Left cardiac atrium (tissue), 4 donors: ENCODE measurements at regions of chr2 and their contacts with region 1.

Region 1: DNA sequence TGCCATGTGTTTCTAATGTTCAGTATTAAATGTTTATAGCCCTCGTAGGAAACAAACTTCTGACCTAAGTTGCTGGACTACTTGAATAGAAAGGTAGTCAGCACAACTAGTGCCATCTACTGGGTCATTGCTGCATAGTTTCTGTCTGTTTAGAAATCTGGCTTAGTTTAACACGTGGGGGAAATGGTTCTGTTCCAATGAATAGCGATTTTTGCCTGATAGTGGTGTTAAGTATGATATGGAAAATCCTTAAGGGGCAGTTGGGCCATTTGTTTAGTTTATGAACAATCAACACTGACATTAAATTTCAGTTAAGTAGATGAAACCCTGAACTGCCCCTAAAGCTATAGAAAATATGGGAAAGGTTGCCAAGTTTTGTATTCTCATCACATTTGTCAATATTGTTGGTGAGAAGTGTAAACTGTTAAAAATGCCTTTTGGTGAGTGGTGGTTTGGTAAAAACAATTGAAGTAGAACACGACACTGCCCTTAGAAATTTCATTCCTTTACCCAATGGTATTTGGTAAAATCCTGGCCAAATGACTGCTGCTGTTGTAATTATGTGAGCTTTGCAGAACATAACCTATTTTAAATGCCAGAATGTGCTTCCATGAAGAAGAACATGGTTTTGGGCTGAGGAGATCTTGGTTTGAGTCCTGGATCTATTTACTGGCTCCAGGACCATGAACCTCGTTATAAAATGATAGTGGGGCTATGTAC is 13.2 kb downstream of the NABP1 start:
- DNase-seq: no peak
- ATAC-seq: peak; percentile 56 to 77

Region 2: DNA sequence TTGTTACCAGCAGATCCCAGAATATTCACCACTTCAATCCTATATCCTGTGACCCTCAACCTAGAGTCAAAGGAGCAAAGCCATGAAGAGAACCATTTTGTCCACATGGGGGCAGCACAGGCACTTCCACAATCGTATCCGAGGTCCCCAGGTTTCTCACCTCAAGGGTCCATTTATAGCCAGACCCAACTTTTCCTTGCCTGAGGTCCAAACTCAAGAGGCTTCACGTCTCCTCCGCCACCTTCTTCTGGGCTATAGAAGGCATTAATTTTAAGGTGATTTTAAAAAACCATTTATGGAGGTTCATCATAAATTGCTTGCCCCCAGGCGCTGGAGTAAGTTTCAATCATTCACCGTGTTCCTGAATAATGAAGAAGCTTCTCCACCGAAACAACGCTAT is 124.8 kb before region 1 on chr2:
- intact Hi-C with region 1: loop called (anchors 2 to 5 kb)
- DNase-seq: peak; percentile 54
- ATAC-seq: peak; percentile 65 to 77

Region 3: GRCh38 chr2:191617575-191617974 is 73.6 kb before region 1 on chr2:
- intact Hi-C with region 1: no loop called
- DNase-seq: no peak
- ATAC-seq: no peak